Activated CD4-positive, alpha-beta T cell treated with anti-CD3 and anti-CD28 coated beads for 36 hours (primary cell): ENCODE measurements at regions of chr3 and their contacts with region 1.

Region 1: DNA sequence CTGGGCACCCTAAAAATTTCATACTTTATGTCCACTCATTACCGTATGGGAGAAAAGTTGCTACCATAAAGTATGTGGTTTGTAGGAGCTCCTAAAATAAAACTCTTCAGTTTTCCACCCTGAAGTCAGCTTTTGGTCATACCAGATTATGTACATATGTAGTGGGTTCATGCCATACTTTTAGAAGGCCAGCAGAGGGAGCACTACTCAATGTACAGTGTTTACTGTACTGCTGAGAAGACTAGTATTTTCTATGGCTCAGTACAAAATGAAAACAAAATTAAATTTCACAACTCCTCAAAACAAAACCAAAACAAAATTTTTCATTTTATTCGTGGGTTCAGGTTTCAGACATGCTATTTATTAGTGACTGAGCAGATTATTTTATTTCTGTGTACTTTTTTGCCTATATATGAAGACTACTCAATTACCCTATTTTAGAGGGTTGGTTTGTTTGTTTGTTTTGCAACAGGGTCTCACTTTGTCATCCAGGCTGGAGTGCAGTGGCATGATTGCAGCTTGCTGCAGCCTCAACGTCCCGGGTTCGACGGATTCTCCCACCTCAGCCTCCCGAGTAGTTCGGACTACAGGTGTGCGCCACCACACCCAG is 24.3 kb downstream of the NXPE3 start:
- DNase-seq: peak; percentile 68
- ATAC-seq: peak; percentile 99
- H3K4me3 Mint-ChIP-seq: no peak overlapping the region
- H3K27ac Mint-ChIP-seq: no peak overlapping the region
- H3K4me1 Mint-ChIP-seq: peaks cover 36% of the 10 kb centered on the region
- H3K27me3 Mint-ChIP-seq: no peaks in the 10 kb centered on the region

Region 2: DNA sequence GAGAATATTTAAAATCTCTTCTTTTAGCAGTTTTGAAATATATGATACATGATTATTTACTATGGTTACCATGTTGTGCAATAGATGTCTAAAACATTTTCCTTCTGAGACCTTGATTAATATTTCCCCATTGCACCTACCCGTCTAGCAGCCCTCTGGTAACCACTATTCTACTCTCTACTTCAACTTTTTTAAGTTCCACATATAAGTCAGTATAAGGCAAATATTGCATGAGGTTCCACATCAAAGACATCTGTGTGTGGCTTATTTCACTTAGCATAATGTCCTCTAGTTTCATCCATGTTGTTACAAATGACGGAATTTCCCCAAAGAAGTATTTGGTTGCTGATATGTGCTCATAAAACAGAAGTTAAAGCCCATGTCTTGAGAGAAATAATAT is 16.5 kb after region 1 on chr3:
- CTCF ChIA-PET with region 1: interaction called, 31 read pairs
- POLR2A ChIA-PET with region 1: no interaction called
- intact Hi-C with region 1: no loop called
- DNase-seq: no peak
- ATAC-seq: peak; percentile 67
- H3K4me3 Mint-ChIP-seq: no peak overlapping the region
- H3K27ac Mint-ChIP-seq: no peak overlapping the region
- H3K4me1 Mint-ChIP-seq: peaks cover 45% of the 10 kb centered on the region
- H3K27me3 Mint-ChIP-seq: no peaks in the 10 kb centered on the region